Mammary epithelial cell (primary cell): ENCODE measurements at regions of chr6 and their contacts with region 1.

Region 1: GRCh38 chr6:41222513-41222912 is 5.6 kb upstream of the TREML4 start:
- DNase-seq: no peak
- H3K4me3 ChIP-seq: no peak overlapping the region
- H3K27ac ChIP-seq: no peak overlapping the region
- H3K4me1 ChIP-seq: no peaks in the 10 kb centered on the region
- H3K27me3 ChIP-seq: no peaks in the 10 kb centered on the region
- CTCF ChIP-seq: no peak

Region 2: GRCh38 chr6:41155132-41155805 is 67.2 kb before region 1 on chr6:
- CTCF ChIA-PET with region 1: no interaction called
- dilution Hi-C with region 1: no loop called
- in situ Hi-C with region 1: no loop called
- intact Hi-C with region 1: no loop called
- DNase-seq: no peak
- H3K4me3 ChIP-seq: no peak overlapping the region
- H3K27ac ChIP-seq: no peak overlapping the region
- H3K4me1 ChIP-seq: peaks cover 29% of the 10 kb centered on the region
- H3K27me3 ChIP-seq: no peaks in the 10 kb centered on the region
- CTCF ChIP-seq: no peak

Region 3: DNA sequence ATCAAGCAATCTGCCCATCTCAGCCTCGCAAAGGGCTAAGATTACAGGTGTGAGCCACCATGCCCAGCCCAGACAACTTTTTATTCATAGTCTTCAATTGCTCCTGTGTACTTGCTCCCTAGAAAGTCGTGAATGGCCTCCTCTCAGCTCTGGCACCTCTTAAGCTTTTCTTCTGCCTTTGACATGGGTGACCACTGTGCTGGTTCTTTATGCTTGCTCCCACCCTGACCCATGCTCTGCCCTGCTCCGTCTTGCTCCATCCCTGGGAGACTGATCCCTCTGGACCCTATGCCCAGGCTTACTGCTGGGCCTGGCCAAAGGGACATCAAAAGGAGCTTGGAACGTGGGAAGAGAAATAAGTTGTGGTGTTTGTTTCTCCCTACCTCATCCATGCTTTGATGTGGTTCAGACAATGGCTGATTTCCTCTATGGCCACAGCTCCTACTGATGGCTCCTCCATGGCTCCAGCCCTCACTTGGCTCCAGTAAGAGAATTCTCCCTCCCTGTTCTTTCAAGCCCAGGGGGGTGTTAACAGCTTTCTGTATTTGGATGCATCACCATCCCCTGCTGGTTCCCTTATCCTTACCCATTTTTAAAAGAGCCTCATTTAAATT is 51.9 kb before region 1 on chr6:
- CTCF ChIA-PET with region 1: no interaction called
- dilution Hi-C with region 1: loop called (anchors 5 kb)
- in situ Hi-C with region 1: no loop called
- intact Hi-C with region 1: no loop called
- DNase-seq: no peak
- H3K4me3 ChIP-seq: no peak overlapping the region
- H3K27ac ChIP-seq: no peak overlapping the region
- H3K4me1 ChIP-seq: no peaks in the 10 kb centered on the region
- H3K27me3 ChIP-seq: no peaks in the 10 kb centered on the region
- CTCF ChIP-seq: no peak

Region 4: DNA sequence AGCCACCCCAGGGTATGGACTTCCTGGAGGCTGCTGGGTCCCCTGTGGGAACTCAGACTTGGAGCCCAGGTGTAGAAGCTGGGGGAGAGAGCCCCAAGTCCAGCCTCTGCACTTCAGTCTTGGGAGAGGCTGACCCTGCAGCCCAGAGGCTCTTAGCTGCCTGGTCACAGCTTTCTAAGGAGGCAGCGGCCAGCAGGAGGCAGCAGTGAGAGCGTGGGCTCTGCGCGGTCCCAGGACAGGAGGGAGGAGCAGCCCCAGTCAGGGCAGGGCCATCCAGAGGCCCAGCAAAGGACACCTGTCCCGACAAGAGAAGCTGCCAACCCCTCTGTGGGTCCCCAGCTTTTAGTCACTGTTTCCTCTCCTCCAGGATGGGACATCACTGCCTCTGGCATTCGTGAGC is 30.9 kb before region 1 on chr6:
- CTCF ChIA-PET with region 1: no interaction called
- dilution Hi-C with region 1: no loop called
- in situ Hi-C with region 1: no loop called
- intact Hi-C with region 1: no loop called
- DNase-seq: no peak
- H3K4me3 ChIP-seq: no peak overlapping the region
- H3K27ac ChIP-seq: no peak overlapping the region
- H3K4me1 ChIP-seq: no peaks in the 10 kb centered on the region
- H3K27me3 ChIP-seq: peaks cover 2% of the 10 kb centered on the region
- CTCF ChIP-seq: peak; percentile 40 to 64